ENCODE measurements at regions of chr1 and their contacts with region 1.

Region 1: DNA sequence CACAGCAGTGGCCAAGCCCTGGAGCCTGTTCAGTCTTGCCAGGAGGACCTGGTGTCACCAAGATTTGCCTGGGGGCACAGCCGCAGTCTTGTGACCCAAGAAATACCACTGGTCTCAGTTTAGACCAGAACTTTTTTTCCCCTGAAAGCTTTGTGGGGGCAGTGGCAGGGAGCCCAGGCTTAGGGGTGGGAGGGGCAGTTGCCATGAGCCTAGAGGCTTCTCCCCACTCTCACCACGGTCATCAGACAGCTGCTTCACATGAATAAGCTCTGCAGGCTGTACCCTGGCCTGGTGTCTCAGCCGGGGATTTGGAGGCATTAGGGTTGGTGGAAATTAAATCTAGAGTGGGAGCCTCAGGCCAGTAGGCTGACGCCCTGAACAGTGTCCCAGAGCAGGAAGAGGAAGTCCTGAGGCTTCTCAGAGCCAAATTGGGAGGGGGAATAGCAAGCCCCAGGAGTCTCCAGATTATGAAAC is 73.7 kb downstream of the SLC16A1 start:
- DNase-seq: no peak
- H3K4me3 Mint-ChIP-seq: no peak overlapping the region
- H3K27ac Mint-ChIP-seq: no peak overlapping the region
- H3K4me1 Mint-ChIP-seq: no peaks in the 10 kb centered on the region
- H3K27me3 Mint-ChIP-seq: peaks cover 2% of the 10 kb centered on the region

Region 2: GRCh38 chr1:112809253-112809684 is 73.0 kb before region 1 on chr1:
- CTCF ChIA-PET with region 1: interaction called, 4 read pairs
- intact Hi-C with region 1: loop called (anchors 2 kb)
- DNase-seq: peak; percentile 85
- H3K4me3 Mint-ChIP-seq: no peak overlapping the region
- H3K27ac Mint-ChIP-seq: no peak overlapping the region
- H3K4me1 Mint-ChIP-seq: no peaks in the 10 kb centered on the region
- H3K27me3 Mint-ChIP-seq: peaks cover 2% of the 10 kb centered on the region

Region 3: DNA sequence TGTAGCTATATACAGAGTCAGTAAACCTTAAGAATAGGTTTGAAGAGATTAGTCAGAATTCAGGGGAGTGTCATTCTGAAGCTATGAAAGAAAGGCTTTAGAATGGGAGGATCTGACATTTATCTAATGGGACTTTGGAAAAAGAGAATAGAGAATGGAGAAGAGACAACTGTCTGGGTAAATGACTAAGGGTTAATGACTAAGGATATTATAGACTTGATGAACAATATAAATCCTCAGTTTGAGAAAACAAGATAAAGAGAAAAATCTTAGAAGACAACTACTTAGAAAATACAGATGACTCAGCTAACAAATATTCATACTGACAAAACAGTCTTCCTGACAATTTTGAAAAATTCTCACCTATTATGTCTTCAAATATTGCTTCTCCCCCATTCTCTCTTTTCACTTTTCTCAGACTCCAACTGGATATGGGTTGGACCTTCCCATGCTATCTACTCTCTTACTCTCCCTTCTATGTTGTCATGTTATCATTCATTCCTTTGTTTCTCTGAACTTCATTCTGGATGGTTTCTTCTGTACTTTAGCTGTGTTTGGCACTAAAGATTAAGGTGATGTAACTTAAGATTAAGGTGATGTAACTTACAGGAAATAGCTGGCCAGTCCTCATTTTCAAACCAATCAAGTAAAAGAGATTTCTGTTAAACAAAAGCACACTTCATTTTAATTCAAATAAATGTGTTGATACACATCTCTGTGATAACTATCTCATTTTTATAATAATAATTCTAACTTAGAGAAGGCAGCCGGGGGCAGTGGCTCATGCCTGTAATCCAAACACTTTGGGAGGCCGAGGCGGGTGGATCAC is 53.4 kb after region 1 on chr1:
- CTCF ChIA-PET with region 1: interaction called, 11 read pairs
- intact Hi-C with region 1: no loop called
- DNase-seq: no peak
- H3K4me3 Mint-ChIP-seq: peak overlapping the region; percentile 32
- H3K27ac Mint-ChIP-seq: peak overlapping the region; percentile 83
- H3K4me1 Mint-ChIP-seq: peaks cover 45% of the 10 kb centered on the region
- H3K27me3 Mint-ChIP-seq: no peaks in the 10 kb centered on the region

Region 4: DNA sequence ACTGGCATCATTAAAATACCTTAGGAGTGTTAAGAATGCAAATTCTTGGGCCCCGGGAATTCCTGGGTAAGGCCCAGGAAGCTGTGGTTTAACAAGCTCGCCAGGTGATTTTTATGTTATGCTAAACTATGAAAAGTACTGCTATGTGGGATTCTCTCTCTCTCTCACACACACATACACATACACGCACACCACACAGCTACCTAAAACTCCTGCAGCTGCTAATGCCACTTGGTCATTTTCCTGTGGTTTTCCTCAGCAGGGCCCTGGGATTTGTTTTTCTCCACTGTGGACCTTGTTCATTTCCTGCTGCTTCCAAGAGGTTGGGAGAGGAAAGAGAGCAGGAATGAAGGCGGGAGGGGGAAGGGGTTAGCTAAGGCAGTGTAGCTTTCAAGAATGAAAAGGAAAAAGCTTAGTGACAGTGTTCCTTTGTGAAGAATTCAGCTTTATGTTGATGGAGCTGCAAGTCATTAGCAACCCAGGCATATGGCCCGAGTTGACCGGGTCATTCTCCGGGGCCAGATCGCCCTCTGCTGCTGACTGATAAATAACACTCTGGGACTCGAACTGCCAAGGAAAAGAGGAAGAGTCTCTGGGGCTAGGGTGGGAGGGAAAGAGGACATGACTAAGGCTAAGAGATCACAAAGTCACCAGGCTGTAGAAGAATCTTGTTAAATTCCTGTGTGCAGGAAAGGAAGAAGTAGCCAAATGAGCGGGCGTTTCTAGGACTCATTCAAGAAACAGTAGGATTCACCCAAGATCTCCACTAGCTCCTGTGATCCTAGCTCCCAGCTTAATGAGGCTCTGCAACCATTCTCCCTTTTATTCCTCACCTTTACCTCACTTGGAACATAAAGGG is 160.2 kb after region 1 on chr1:
- CTCF ChIA-PET with region 1: interaction called, 26 read pairs
- intact Hi-C with region 1: loop called (anchors 1 kb)
- DNase-seq: peak; percentile 65
- H3K4me3 Mint-ChIP-seq: no peak overlapping the region
- H3K27ac Mint-ChIP-seq: peak overlapping the region; percentile 73
- H3K4me1 Mint-ChIP-seq: peaks cover 26% of the 10 kb centered on the region
- H3K27me3 Mint-ChIP-seq: peaks cover 2% of the 10 kb centered on the region